Cardiac septum (tissue), 1 donor: ENCODE measurements at regions of chr12 and their contacts with region 1.

Region 1: GRCh38 chr12:29216797-29217575 is 67.9 kb downstream of the FAR2 start:
- DNase-seq: no peak

Region 2: GRCh38 chr12:29152223-29152868 is 64.6 kb before region 1 on chr12:
- intact Hi-C with region 1: loop called (anchors 2 kb)
- DNase-seq: no peak